Activated B cell treated with CpG ODN at 0.5 μM for 24 hours (primary cell): ENCODE measurements at regions of chr10 and their contacts with region 1.

Region 1: DNA sequence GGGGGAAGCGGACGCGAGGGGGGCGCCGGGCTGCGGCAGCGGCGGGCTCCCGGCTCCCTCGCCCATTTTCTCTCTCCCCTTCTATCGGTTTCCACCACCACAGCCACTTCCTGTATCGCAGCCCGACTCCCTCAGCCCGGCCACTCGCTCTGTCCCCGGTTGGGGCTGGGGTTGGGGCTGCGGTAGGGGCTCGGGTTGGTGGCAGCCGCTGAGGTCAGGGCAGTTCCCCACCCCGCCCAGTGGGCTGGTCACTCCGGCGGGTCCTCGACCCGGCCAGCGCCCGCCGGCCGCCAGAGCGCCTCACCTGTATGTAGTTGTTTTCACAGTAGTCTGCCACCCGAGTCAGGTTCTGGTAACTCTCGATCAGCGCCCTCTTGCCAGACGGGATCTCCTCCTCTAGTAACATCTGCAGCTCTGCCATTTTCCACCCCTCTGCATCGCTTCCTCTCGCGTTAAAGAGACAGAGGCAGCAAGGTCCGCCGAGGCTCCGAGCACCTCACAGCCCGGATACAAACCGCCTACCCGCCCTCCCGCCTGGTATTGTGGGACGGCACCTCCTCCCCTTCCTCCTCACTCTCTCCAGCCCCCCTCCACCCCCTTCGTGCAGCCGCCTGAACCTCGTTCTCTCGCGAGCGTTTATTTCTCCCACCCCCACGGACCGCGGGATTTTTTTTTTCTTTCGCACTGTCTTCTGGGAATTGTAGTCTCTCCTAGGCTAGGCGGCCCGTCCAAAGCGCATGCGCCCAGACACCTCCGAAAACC is at the start of gene ABI1:
- DNase-seq: peak; percentile 87
- ATAC-seq: peak; percentile 90
- H3K4me3 Mint-ChIP-seq: peak within 1 kb of the TSS; percentile 98
- H3K27ac Mint-ChIP-seq: peak within 1 kb of the TSS; percentile 98
- H3K4me1 Mint-ChIP-seq: peaks cover 43% of the 10 kb centered on the region
- H3K27me3 Mint-ChIP-seq: peaks cover 3% of the 10 kb centered on the region
- CTCF ChIP-seq: no peak
- total RNA-seq, gene ABI1: 76.7 and 83.5 TPM in 2 replicates

Region 2: DNA sequence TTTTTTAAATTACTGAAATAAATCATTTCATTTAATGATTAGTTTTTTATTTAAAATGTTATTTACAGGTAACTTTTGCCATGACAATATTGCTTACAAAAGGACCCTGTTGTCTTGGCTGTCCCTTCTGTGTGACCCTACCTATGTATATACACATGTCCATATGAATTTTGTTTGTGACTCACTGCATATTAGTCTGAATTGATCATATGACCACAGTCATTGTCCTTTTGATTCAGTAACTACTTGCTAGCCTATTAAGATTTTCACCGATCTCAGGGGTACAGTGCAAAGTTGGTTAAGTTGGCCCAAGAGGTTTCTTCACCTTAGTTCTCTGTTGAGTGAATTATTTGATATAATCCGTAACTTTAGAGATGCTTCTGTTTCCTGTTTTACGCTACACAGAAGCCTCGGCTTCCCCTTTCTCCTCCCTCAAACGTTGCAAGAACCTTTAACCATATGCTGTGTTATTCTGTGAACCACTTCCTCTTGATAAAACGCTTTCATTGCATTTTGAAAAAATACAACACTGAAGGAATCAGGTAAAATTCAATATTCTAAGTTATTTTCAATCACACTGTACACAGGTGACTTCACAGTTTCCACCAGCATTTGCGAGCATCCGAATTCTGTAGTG is 378.6 kb before region 1 on chr10:
- CTCF ChIA-PET with region 1: no interaction called
- POLR2A ChIA-PET with region 1: no interaction called
- intact Hi-C with region 1: loop called (anchors 1 kb)
- DNase-seq: no peak
- ATAC-seq: peak; percentile 79
- H3K4me3 Mint-ChIP-seq: peak overlapping the region; percentile 46
- H3K27ac Mint-ChIP-seq: peak overlapping the region; percentile 83
- H3K4me1 Mint-ChIP-seq: peaks cover 82% of the 10 kb centered on the region
- H3K27me3 Mint-ChIP-seq: no peaks in the 10 kb centered on the region
- CTCF ChIP-seq: no peak

Region 3: DNA sequence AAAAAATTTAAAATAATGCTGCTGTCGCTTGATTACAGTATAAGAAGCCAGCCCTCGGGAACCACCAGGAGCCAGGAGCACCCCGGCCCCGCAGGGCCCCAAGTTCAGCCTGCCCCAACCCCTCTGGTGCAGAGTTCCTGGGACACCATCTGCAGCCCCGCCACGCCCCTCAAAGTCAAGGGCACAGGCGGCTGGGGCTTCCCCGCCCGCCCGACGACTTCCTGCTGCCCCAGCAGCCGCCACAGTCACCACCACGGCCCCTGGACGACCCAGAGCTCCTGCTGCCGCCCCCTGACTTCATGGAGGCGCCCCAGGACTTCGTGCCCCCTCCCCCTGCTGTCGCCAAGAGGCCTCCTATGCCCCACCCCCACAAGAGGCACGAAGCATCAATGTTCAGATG is 266.7 kb before region 1 on chr10:
- CTCF ChIA-PET with region 1: no interaction called
- POLR2A ChIA-PET with region 1: no interaction called
- intact Hi-C with region 1: no loop called
- DNase-seq: no peak
- ATAC-seq: peak; percentile 76
- H3K4me3 Mint-ChIP-seq: no peak overlapping the region
- H3K27ac Mint-ChIP-seq: no peak overlapping the region
- H3K4me1 Mint-ChIP-seq: no peaks in the 10 kb centered on the region
- H3K27me3 Mint-ChIP-seq: no peaks in the 10 kb centered on the region
- CTCF ChIP-seq: no peak

Region 4: DNA sequence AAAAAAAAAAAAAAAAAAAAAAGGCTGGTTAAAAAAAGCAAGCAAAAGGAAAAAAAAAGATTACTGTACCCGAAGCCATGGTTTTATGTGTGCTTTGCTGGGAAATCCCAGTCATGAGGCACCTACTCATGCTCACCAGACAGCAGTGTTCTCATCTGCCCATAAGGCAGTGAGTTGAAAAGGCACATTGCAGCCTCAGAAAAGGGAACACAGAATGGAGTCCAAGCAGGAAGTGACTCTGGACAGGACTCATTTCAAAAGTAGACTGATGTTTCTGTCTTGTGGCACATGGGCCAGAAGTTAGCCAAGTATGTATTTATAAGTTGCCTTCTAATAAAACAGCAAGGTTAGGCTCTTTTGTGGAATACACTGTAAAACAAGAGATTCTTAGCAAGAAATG is 122.9 kb before region 1 on chr10:
- CTCF ChIA-PET with region 1: interaction called, 4 read pairs
- POLR2A ChIA-PET with region 1: interaction called, 33 read pairs
- intact Hi-C with region 1: loop called (anchors 1 kb)
- DNase-seq: no peak
- ATAC-seq: peak; percentile 84
- H3K4me3 Mint-ChIP-seq: peak overlapping the region; percentile 63
- H3K27ac Mint-ChIP-seq: peak overlapping the region; percentile 95
- H3K4me1 Mint-ChIP-seq: peaks cover 67% of the 10 kb centered on the region
- H3K27me3 Mint-ChIP-seq: no peaks in the 10 kb centered on the region
- CTCF ChIP-seq: no peak

Region 5: DNA sequence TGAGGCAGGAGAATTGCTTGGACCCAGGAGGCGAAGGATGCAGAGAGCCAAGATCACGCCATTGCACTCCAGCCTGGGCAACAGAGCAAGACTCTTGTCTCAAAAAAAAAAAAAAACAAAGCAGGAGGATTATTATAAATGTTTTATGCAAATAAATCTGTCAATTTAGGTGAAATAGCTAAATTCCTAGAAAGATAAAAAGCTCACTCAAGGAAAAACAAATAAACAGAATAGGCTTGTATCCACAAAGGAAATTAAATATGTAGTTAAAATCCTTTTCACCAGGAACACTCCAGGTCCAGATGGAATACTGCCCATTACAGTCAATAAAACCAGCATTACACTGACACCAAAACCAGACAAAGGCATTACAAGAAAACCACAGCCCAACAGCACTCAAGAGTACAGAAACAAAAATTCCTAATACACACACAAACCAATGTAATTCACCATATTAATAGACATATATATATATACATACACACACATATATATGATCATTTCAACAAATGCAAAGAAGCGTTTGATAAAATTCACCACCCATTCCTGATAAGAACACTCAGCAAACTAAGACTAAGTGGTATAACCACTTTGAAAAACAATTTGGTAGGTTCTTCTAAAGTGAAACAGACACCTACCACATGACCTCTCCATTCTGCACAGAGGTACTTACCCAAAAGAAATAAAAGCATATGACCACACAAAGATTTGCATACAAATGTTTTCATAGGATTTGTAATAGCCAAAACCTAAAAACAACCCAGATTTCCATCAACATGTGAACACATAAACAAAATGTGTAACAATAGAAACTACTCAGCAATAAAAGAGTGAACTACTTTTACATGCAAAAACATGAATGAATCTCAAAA is 38.7 kb before region 1 on chr10:
- CTCF ChIA-PET with region 1: interaction called, 5 read pairs
- POLR2A ChIA-PET with region 1: interaction called, 3 read pairs
- intact Hi-C with region 1: loop called (anchors 5 kb)
- DNase-seq: no peak
- ATAC-seq: no peak
- H3K4me3 Mint-ChIP-seq: no peak overlapping the region
- H3K27ac Mint-ChIP-seq: no peak overlapping the region
- H3K4me1 Mint-ChIP-seq: peaks cover 64% of the 10 kb centered on the region
- H3K27me3 Mint-ChIP-seq: no peaks in the 10 kb centered on the region
- CTCF ChIP-seq: no peak

Region 6: DNA sequence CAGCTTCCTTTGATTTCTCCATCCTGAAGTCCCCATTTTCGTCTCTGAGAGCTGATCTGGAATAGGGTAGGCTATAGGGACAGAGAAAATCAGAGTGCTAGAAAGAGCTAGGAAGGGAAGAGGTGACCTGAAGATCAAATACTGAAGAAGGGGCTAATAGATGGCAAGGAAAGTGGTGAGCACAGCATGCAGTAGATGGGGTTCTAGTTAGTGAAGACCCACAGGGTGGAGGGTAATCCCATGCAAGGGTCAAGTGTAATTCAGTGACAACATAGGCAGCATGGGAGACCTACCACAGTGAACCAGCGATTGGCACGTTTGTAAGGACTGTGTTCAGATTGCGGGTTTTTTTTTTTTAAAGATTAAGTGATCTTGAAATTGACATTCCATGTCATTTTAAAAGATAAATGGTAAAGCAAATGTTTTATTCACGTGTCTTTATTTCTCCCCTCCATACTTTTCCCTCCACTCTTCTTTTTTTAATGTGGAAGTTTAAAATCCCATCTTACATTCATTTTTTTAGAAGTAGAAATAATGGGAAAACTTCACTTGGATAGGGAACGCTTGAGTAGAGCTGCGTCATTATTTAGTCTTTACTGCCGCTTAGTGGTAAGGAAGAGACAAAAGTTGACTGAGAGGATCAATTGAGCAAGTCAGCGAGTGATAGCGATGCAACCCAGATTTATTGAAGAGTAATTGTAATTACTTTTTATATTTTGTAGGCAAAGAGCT is 21.1 kb after region 1 on chr10:
- CTCF ChIA-PET with region 1: interaction called, 13 read pairs
- POLR2A ChIA-PET with region 1: no interaction called
- intact Hi-C with region 1: loop called (anchors 1 kb)
- DNase-seq: no peak
- ATAC-seq: peak; percentile 75
- H3K4me3 Mint-ChIP-seq: no peak overlapping the region
- H3K27ac Mint-ChIP-seq: no peak overlapping the region
- H3K4me1 Mint-ChIP-seq: peaks cover 2% of the 10 kb centered on the region
- H3K27me3 Mint-ChIP-seq: peaks cover 11% of the 10 kb centered on the region
- CTCF ChIP-seq: no peak

Region 7: DNA sequence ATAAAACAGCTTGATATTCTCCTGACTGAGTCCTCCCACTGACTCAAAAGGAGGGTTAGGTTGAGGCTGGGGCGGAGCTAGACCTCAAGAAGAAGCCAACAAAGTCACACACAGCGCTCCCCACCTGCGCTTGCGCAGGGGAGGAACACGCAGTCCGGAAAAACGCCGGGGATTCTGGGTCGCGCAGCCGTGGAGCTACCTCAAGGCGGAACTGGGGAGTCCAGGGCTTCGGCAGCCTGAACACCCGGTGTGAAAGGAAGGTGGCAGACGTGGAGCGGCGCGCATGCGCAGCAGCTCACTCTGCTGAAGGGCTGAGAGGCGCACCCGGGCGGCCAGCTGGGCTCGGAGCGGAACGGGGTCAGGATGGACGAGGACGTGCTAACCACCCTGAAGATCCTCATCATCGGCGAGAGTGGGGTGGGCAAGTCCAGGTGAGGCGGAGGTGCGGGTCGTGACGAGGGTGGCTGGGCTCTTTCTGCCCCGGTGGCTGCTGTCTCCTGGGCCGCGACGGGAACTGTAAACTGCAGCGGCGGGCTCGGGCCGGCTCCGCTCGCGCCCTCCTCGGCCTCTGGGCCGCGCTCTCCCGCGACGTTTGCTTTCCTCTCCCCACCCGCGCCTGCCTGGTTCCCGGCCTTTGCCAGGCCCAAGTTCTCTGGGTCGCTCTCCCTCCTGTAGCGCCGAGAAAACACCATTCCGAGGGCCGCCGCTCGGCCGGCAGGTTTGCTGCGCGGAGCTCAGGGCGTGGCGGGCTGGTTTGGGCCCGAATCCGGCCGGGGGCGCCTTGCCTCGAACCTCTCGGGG is 643.6 kb after region 1 on chr10 and contains the start of gene RAB18:
- CTCF ChIA-PET with region 1: no interaction called
- POLR2A ChIA-PET with region 1: no interaction called
- intact Hi-C with region 1: loop called (anchors 2 kb)
- DNase-seq: peak; percentile 93
- ATAC-seq: peak; percentile 96
- H3K4me3 Mint-ChIP-seq: peak within 1 kb of the TSS; percentile 100
- H3K27ac Mint-ChIP-seq: peak within 1 kb of the TSS; percentile 99
- H3K4me1 Mint-ChIP-seq: peaks cover 41% of the 10 kb centered on the region
- H3K27me3 Mint-ChIP-seq: no peaks in the 10 kb centered on the region
- CTCF ChIP-seq: no peak
- total RNA-seq, gene RAB18: 48.3 and 55.6 TPM in 2 replicates